OCI-LY7 (cell line): ENCODE measurements at regions of chr4 and their contacts with region 1.

Region 1: GRCh38 chr4:184538023-184538599 is 63.8 kb upstream of the IRF2 start:
- DNase-seq: peak; percentile 93
- H3K4me3 ChIP-seq: peak overlapping the region; percentile 76
- H3K27ac ChIP-seq: peak overlapping the region; percentile 82
- H3K4me1 ChIP-seq: peaks cover 45% of the 10 kb centered on the region
- CTCF ChIP-seq: peak; percentile 89

Region 2: GRCh38 chr4:183504064-183504929 is 1033.8 kb before region 1 on chr4:
- CTCF ChIA-PET with region 1: no interaction called
- POLR2A ChIA-PET with region 1: no interaction called
- intact Hi-C with region 1: loop called (anchors 5 kb)
- DNase-seq: peak; percentile 98
- H3K4me3 ChIP-seq: peak overlapping the region; percentile 100
- H3K27ac ChIP-seq: peak overlapping the region; percentile 89
- H3K4me1 ChIP-seq: peaks cover 23% of the 10 kb centered on the region
- CTCF ChIP-seq: no peak

Region 3: GRCh38 chr4:184287697-184288255 is 250.3 kb before region 1 on chr4:
- CTCF ChIA-PET with region 1: interaction called, 3 read pairs
- POLR2A ChIA-PET with region 1: interaction called, 45 read pairs
- intact Hi-C with region 1: loop called (anchors 1 kb)
- DNase-seq: peak; percentile 55
- H3K4me3 ChIP-seq: peak overlapping the region; percentile 58
- H3K27ac ChIP-seq: peak overlapping the region; percentile 96
- H3K4me1 ChIP-seq: peaks cover 99% of the 10 kb centered on the region
- CTCF ChIP-seq: peak; percentile 39; the same call in 1 of the 2 replicates

Region 4: DNA sequence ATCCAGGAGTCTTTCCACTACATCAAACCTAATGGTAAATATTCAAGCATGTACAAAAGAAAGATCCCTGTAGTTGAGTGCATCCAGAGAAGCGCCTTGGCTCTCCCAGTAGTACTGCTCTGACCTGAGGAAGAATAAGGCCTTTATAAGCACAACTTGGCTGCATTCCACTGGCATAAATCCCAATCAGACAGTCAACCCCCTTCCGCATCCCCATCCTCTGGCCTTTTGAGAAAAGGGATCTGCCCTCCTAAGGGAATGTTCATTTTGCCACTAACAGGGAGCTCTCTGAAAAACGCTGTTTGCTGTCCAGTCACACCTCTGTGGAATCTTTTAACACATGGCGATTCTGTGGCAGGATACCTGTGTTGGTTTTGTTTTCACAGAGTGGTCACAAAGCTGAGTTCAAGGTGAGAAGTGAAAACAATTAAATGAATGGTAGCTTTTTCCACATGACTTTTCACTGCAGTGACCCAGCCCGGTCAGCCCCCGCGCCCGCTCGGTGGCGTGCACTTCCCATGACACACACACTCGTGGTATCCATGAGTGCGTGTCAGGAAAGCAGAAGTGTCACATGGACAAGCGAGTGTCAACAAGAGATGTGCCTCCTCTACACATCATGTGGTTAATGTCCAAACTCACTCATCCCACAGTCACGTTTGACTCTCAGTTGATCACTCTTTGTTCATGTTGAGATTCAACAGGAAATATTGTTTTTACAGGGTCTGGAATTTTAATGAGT is 208.3 kb before region 1 on chr4:
- CTCF ChIA-PET with region 1: no interaction called
- POLR2A ChIA-PET with region 1: interaction called, 9 read pairs
- intact Hi-C with region 1: loop called (anchors 2 kb)
- DNase-seq: no peak
- H3K4me3 ChIP-seq: no peak overlapping the region
- H3K27ac ChIP-seq: peak overlapping the region; percentile 82
- H3K4me1 ChIP-seq: peaks cover 77% of the 10 kb centered on the region
- CTCF ChIP-seq: no peak

Region 5: GRCh38 chr4:184384056-184384809 is 153.9 kb before region 1 on chr4:
- CTCF ChIA-PET with region 1: no interaction called
- POLR2A ChIA-PET with region 1: interaction called, 3 read pairs
- intact Hi-C with region 1: loop called (anchors 1 kb)
- DNase-seq: peak; percentile 92
- H3K4me3 ChIP-seq: peak overlapping the region; percentile 45
- H3K27ac ChIP-seq: peak overlapping the region; percentile 29
- H3K4me1 ChIP-seq: peaks cover 70% of the 10 kb centered on the region
- CTCF ChIP-seq: no peak

Region 6: DNA sequence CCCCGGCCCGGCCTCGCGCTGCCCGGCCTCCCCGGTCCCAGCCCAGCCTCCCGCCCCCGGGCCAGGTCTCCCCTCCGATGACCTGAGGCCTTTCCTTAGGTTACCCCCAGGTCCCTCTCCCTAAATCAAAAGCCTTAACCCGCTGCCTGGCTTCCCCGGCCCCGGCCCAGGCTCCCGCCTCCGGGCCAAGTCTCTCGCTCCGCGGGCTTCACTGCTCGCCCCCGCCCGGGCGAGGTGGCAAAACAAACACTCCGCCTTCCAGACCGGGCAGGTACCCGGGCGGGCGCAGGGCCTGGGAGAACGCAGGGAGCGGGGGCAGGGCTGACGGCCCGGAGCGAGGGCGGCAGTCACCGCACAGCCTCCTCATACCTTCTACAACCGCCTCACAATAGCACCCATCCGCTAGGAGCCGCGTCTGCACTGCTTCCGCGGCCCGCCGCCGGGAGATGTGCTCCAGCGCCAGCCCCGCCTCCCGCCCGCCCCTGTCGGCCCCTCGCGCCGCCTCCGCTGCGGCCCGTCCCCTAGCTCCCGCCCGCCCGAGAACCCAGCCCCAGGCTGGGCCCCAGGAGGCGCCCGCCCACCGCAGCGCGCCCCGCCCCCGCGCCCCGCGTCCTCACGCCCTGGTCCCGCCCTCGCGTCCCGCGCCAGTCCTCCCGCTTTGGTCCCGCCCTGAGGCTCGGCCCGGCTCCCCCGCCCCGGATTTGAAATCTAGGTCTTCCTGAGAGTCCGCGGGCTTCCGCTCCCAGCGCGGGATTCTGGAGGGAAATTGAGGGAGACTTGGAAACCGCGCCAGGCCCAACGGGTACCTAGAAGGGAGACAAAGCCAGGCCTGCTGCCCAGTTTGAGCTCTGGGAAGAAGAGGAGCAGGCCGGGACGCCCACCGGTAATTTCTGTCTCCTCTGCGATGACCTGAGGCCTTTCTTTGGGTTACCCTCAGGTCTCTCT is 111.2 kb after region 1 on chr4 and contains the starts of genes CASP3 and PRIMPOL:
- CTCF ChIA-PET with region 1: no interaction called
- POLR2A ChIA-PET with region 1: interaction called, 4 read pairs
- intact Hi-C with region 1: loop called (anchors 2 kb)
- DNase-seq: peak; percentile 96
- H3K4me3 ChIP-seq: peak within 1 kb of the TSS; percentile 93
- H3K27ac ChIP-seq: peak within 1 kb of the TSS; percentile 79
- H3K4me1 ChIP-seq: peaks cover 42% of the 10 kb centered on the region
- CTCF ChIP-seq: 0 out of 2 replicates have a peak, but pooled peaks have one; percentile 21
- total RNA-seq, gene CASP3: 25.8 and 29.5 TPM in 2 replicates
- total RNA-seq, gene PRIMPOL: 8.8 and 9.2 TPM in 2 replicates